GM12878 (cell line): ENCODE measurements at regions of chr2 and their contacts with region 1.

Region 1: GRCh38 chr2:153197402-153198386 is 280.9 kb downstream of the RPRM start:
- DNase-seq: no peak
- ATAC-seq: no peak
- H3K4me3 ChIP-seq: no peak overlapping the region
- H3K27ac ChIP-seq: no peak overlapping the region
- H3K4me1 ChIP-seq: no peaks in the 10 kb centered on the region
- H3K27me3 ChIP-seq: no peaks in the 10 kb centered on the region
- CTCF ChIP-seq: no peak
- EP300 ChIP-seq: no peak
- POLR2A ChIP-seq: no peak
- RAD21 ChIP-seq: no peak

Region 2: DNA sequence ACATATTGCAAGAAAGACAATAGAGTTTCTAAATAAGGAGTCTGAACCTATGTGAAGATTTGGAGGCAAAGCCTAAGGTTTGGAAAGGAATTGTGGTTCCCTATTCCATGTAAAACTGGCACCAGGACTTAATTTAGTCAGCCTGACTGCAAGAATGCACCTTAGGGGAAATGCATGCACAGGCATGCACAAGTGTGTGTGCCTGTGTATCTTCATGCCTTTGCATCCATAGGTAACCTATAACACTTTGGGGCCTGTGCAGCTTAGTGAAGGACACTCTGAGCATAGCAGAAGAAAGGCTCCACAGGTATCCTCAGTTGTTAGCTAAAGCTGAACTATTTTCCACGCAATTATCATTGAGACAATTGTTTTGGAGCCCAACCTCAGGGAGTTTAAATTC is 207.5 kb after region 1 on chr2:
- CTCF ChIA-PET with region 1: no interaction called
- POLR2A ChIA-PET with region 1: no interaction called
- RAD21 ChIA-PET with region 1: no interaction called
- SMC1A ChIA-PET with region 1: no interaction called
- in situ Hi-C with region 1: no loop called
- intact Hi-C with region 1: no loop called
- DNase-seq: no peak
- ATAC-seq: no peak
- H3K4me3 ChIP-seq: no peak overlapping the region
- H3K27ac ChIP-seq: no peak overlapping the region
- H3K4me1 ChIP-seq: no peaks in the 10 kb centered on the region
- H3K27me3 ChIP-seq: no peaks in the 10 kb centered on the region
- CTCF ChIP-seq: no peak
- EP300 ChIP-seq: no peak
- POLR2A ChIP-seq: no peak
- RAD21 ChIP-seq: no peak

Region 3: DNA sequence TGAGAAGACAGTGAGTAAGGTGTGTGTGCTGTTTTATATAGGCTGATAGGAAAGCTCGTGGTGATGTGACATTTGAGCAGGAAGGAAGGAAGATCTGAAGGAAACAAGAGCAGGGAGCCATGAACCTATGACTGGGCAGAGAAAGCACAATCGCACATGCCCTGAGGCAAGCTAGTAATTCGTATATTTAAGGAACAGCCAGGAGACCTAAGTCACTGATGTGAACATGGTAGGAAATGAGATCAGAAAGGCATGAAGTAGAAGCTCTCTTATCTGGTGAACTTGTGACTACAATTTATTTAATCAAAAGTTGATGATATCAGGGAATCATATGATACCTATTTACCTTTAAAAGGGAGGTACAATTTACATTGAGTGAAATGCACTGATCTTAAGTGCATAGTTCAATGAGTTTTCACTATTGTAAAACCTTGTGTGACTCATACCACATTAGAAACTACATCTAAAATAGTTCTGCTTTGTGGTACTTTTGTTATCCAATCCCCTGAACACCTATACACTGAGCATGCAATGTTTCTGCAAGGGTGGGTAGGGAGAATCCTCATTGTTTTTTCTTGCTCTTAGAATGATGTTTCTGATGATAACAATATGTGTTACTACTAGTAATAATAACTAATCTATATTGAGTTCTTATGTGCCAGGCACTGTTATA is 741.6 kb after region 1 on chr2:
- CTCF ChIA-PET with region 1: no interaction called
- POLR2A ChIA-PET with region 1: no interaction called
- RAD21 ChIA-PET with region 1: no interaction called
- SMC1A ChIA-PET with region 1: no interaction called
- in situ Hi-C with region 1: no loop called
- intact Hi-C with region 1: loop called (anchors 5 kb)
- DNase-seq: no peak
- ATAC-seq: peak; percentile 76
- H3K4me3 ChIP-seq: no peak overlapping the region
- H3K27ac ChIP-seq: no peak overlapping the region
- H3K4me1 ChIP-seq: no peaks in the 10 kb centered on the region
- H3K27me3 ChIP-seq: no peaks in the 10 kb centered on the region
- CTCF ChIP-seq: no peak
- EP300 ChIP-seq: no peak
- POLR2A ChIP-seq: no peak
- RAD21 ChIP-seq: no peak